ENCODE measurements at regions of chr9 and their contacts with region 1.

Region 1: DNA sequence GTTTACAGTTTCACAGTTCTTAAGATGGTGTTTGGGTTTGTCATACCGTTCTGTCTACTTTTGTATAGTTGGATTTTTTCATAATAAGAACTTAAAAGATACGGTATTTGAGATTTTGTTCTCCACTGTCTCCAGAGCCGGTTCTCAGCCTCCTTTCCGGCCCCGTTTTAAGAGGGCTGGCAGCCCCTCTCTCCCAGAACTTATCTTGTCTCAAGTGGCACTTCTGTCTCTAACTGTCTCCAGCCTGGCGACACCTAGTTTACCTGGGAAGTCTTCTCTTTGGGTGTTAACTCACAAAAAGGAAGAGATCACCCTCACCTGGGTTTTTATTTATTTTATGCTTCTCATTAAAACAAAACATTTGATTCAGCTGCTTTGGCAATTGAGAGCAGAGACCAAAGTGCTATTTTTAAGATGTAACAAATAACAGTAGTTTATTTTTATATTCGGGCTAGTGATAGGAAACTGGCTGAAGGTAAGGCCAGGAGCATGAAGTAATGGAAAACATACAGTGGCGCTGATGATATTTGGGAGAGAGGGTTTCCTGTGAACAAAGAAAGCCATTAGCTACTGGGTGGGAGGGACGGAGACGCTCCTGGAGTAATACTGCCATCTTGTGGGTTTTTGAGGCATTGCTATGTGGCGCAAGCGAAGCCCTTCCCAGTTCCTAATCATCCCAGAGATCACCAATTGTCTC is 48.3 kb downstream of the ACER2 start:
- DNase-seq: peak; percentile 68 to 81
- ATAC-seq: peak; percentile 93 to 98
- H3K4me3 ChIP-seq: peak overlapping the region; percentile 25; the same call in 1 of the 3 replicates
- H3K27ac ChIP-seq: peak overlapping the region; percentile 28 to 69; a peak in 5 of 6 replicates
- H3K4me1 ChIP-seq: 0 out of 3 replicates have a peak, but pooled peaks cover 5% of the 10 kb centered on the region
- CTCF ChIP-seq: peak; percentile 97
- EP300 ChIP-seq: no peak
- POLR2A ChIP-seq: no peak
- RAD21 ChIP-seq: peak; percentile 97

Region 2: GRCh38 chr9:17942230-17942897 is 1514.8 kb before region 1 on chr9:
- CTCF ChIA-PET with region 1: no interaction called
- POLR2A ChIA-PET with region 1: no interaction called
- DNase-seq: no peak
- ATAC-seq: no peak
- H3K4me3 ChIP-seq: no peak overlapping the region
- H3K27ac ChIP-seq: no peak overlapping the region
- H3K4me1 ChIP-seq: no peaks in the 10 kb centered on the region
- CTCF ChIP-seq: no peak
- EP300 ChIP-seq: no peak
- POLR2A ChIP-seq: no peak
- RAD21 ChIP-seq: no peak

Region 3: GRCh38 chr9:19048966-19049916 is 407.9 kb before region 1 on chr9 and contains the start of gene RRAGA:
- CTCF ChIA-PET with region 1: interaction called, 21 read pairs
- POLR2A ChIA-PET with region 1: interaction called, 4 read pairs
- DNase-seq: peak; percentile 94 to 97
- ATAC-seq: peak; percentile 90 to 93
- H3K4me3 ChIP-seq: peak within 1 kb of the TSS; percentile 82
- H3K27ac ChIP-seq: peak within 1 kb of the TSS; percentile 92 to 95
- H3K4me1 ChIP-seq: peaks cover 21% of the 10 kb centered on the region
- CTCF ChIP-seq: peak; percentile 79
- EP300 ChIP-seq: no peak
- POLR2A ChIP-seq: peak; percentile 98
- RAD21 ChIP-seq: peak; percentile 56 to 80
- polyA plus RNA-seq, gene RRAGA: 133 and 136 TPM in 2 replicates

Region 4: DNA sequence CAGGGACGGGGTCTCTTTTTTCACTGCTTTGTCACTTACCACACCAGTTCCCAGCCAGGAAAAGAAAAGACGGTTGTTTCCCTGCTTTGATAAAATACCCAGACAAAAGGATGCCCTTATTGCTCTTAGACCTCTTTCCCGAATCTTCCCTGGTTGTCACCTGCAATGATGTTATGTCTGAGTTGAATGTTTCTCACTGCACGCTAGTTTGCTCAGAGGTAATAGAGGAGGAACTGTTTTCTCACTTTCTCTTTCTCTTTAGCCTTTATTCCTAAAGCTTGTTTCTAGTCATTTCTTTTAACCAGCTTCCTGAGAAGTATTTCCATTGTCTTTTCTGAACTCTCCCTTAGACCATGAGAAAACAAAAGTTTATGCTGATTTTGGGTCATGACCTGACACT is 15.4 kb before region 1 on chr9:
- CTCF ChIA-PET with region 1: interaction called, 12 read pairs
- POLR2A ChIA-PET with region 1: no interaction called
- DNase-seq: no peak
- ATAC-seq: no peak
- H3K4me3 ChIP-seq: no peak overlapping the region
- H3K27ac ChIP-seq: no peak overlapping the region
- H3K4me1 ChIP-seq: no peaks in the 10 kb centered on the region
- CTCF ChIP-seq: no peak
- EP300 ChIP-seq: no peak
- POLR2A ChIP-seq: no peak
- RAD21 ChIP-seq: no peak

Region 5: DNA sequence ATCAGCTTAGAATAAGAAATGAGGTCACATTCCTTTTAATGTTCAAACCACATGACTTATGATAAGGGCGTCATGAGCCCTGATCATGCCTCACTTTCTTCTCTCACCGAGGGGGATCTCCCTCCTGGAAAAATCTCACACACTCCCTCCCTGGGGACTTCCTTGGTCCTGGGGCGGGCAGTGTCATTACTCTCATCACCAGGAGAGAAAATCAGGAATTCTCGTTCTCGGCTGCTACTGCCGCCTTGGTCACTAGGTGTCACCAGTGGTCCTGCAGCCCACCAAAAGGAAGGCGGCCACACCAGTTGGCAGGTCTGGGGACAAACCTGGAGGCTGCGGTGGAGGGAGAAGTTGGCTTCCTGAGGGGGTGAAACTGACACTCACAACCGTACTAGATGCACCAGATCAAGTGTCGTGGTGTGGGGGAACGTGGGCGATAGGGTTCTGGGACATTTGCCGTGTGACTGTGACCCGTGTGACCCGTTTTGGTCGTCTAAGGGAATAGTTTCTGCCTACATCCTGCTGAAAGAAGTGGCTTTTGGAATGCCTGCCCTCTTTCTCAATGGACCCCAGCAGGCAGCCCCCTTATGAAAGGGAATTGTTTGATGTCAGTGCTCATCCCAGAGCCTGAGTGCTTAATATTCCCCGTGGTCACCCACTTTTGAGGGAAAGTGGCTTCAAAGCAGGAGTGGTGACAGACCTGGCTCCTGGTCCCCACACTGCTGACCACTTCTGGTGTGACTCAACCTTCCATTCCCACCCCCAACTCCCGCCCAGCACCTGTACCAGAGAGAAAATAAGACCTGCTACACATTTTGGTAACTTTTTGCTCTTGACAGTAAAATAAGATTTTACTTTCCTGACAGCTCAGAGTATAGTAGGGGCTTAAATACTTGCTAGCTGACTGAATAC is 14.8 kb after region 1 on chr9:
- CTCF ChIA-PET with region 1: interaction called, 86 read pairs
- POLR2A ChIA-PET with region 1: no interaction called
- DNase-seq: peak; percentile 64 to 79
- ATAC-seq: peak; percentile 83 to 96
- H3K4me3 ChIP-seq: 0 out of 3 replicates have a peak overlapping the region, but pooled peaks have one; percentile 4
- H3K27ac ChIP-seq: no peak overlapping the region
- H3K4me1 ChIP-seq: no peaks in the 10 kb centered on the region
- CTCF ChIP-seq: peak; percentile 76
- EP300 ChIP-seq: no peak
- POLR2A ChIP-seq: no peak
- RAD21 ChIP-seq: peak; percentile 73 to 81

Region 6: DNA sequence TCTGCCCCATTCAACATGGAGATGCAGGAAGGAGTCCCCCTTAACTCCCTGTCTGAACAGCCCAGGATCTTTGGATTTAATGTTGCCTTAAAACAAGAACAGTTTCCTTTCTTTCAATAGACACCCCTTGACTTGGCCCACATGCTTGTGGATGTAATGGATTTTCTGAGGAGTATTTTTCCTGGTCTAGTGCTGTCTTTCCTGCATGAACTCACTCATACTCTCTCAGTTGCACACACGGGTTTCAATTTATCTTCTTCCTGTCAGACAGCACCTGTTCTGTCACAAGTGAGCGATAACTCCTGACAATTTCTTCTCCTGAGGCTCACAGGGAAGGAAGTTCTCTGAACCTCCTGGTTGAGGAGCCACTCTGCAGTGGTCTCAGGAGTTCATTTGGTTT is 36.7 kb after region 1 on chr9:
- CTCF ChIA-PET with region 1: no interaction called
- POLR2A ChIA-PET with region 1: no interaction called
- DNase-seq: no peak
- ATAC-seq: 0 out of 6 replicates have a peak, but pooled peaks of 1 of the 2 experiments have one; percentile 16
- H3K4me3 ChIP-seq: no peak overlapping the region
- H3K27ac ChIP-seq: no peak overlapping the region
- H3K4me1 ChIP-seq: 0 out of 3 replicates have a peak, but pooled peaks cover 3% of the 10 kb centered on the region
- CTCF ChIP-seq: no peak
- EP300 ChIP-seq: no peak
- POLR2A ChIP-seq: no peak
- RAD21 ChIP-seq: no peak

Region 7: DNA sequence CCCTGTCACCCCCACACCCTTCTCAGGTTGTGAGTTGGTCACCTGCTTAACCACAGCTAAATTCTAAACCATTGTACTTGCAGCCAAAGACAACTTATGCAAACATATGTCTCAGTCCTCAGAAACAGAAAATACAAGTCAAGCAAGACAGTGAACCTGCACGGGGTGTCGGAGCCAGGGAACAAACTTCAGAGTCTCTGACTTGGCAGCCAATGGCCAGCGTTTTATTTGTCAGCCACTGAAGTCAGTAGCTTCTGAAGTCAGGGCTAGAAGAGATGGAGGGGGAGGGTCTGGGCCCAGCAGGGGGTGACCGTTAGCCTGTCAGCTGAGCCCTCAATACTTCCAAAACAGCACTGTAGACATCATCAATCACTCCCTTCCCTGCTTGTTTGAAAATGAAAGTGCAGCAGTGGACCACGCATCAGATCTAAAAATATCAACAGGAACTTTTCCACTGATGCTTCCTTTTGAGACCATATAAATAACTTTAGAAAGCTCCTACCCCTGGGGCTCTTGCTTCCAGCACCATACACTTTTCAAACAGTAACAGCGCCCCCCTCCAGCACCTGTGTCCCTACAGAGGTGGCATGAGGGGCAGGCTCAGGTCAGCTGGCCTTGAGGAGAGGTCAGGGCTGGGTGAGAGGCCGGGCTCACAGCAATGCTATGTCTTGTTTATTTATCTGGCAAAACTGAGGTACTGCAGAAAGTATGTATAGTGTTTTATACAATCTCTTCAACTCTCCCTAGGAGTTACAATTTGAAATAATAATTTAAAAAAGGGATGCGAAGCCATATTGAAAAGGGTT is 94.2 kb after region 1 on chr9:
- CTCF ChIA-PET with region 1: no interaction called
- POLR2A ChIA-PET with region 1: no interaction called
- DNase-seq: no peak
- ATAC-seq: peak; percentile 50 to 59; a peak in 2 of 6 replicates
- H3K4me3 ChIP-seq: no peak overlapping the region
- H3K27ac ChIP-seq: no peak overlapping the region
- H3K4me1 ChIP-seq: no peaks in the 10 kb centered on the region
- CTCF ChIP-seq: no peak
- EP300 ChIP-seq: no peak
- POLR2A ChIP-seq: no peak
- RAD21 ChIP-seq: no peak

Measured in A549 (cell line).